Tibial artery (tissue), 4 donors: ENCODE measurements at regions of chr17 and their contacts with region 1.

Region 1: DNA sequence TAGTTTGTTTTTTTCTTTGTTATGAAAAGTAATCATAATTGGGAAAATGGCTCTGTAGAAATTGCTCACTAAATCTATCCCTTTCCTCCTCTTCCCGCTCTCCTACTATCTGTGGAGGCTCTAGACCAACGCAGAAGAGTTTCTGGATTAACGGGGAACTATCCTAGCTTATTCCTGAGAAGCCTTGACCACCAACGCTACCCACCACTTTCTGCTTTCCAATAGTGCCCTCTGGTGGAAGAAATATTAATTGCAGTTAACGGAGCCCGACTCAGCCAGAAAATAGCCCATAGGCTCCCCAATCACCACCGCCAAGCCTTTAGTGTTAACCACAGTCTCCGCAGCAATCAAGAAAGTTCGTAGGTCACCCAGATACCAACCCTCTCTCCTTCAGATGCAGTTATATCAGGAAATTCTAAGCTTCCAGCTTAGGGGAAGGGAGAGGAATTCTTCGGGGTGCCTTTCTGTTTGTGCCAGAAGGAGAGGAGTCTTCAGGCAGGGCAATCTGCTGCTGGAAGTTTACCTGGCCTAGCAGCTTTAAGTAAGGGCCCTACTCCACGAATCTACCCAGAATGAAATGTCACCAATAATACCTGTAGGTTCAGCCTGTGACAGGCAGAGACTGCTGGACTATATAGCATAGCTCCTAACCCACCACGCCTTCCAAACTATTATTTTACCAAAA is 23.0 kb upstream of the NSRP1 start:
- DNase-seq: no peak
- H3K4me3 ChIP-seq: no peak overlapping the region
- H3K27ac ChIP-seq: no peak overlapping the region
- H3K4me1 ChIP-seq: peaks cover 0 to 19% (median 7%) of the 10 kb centered on the region in 4 donors
- H3K27me3 ChIP-seq: no peaks in the 10 kb centered on the region
- CTCF ChIP-seq: peak; percentile 79 to 81

Region 2: GRCh38 chr17:29807520-29808351 is 285.9 kb before region 1 on chr17:
- intact Hi-C with region 1: loop called (anchors 10 kb)
- DNase-seq: peak in 1 of 2 donors; percentile 64
- H3K4me3 ChIP-seq: no peak overlapping the region
- H3K27ac ChIP-seq: no peak overlapping the region
- H3K4me1 ChIP-seq: no peaks in the 10 kb centered on the region
- H3K27me3 ChIP-seq: no peaks in the 10 kb centered on the region
- CTCF ChIP-seq: peak; percentile 65 to 77

Region 3: GRCh38 chr17:29931231-29931932 is 162.2 kb before region 1 on chr17:
- intact Hi-C with region 1: loop called (anchors 10 kb)
- DNase-seq: peak; percentile 60 to 67
- H3K4me3 ChIP-seq: peak overlapping the region; percentile 77 to 98
- H3K27ac ChIP-seq: no peak overlapping the region
- H3K4me1 ChIP-seq: peaks cover 0 to 21% (median 13%) of the 10 kb centered on the region in 4 donors
- H3K27me3 ChIP-seq: no peaks in the 10 kb centered on the region
- CTCF ChIP-seq: peak; percentile 81 to 83

Region 4: DNA sequence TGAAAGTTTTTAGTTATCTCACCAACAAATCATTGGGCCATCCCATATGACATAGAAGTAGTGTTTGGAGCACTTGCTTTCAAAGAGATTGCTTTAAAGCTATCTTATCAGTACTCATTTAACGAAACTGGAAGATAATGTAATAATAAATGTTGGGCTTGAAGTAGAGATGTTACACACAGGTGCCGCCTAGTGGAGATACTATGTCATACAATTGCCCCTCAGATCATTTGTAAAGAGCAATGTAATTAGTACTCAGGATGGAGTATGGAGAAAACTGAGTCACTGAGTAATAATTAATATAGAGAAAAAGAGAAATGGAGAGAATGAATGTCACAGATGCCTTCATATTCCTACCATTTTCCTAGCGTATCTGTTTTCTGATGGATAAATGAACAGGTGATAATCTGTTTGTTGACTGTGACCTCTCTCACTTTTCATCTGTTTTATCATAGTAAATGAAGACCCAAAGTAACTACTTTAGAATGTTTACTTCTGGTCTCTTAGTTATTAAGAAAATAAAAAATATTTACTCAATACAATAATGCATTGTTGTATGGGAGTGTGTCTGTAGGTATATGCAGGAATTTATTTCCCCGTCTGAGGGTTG is 71.8 kb before region 1 on chr17:
- intact Hi-C with region 1: loop called (anchors 10 kb)
- DNase-seq: no peak
- H3K4me3 ChIP-seq: no peak overlapping the region
- H3K27ac ChIP-seq: no peak overlapping the region
- H3K4me1 ChIP-seq: no peaks in the 10 kb centered on the region
- H3K27me3 ChIP-seq: no peaks in the 10 kb centered on the region
- CTCF ChIP-seq: peak; percentile 57 to 64

Region 5: DNA sequence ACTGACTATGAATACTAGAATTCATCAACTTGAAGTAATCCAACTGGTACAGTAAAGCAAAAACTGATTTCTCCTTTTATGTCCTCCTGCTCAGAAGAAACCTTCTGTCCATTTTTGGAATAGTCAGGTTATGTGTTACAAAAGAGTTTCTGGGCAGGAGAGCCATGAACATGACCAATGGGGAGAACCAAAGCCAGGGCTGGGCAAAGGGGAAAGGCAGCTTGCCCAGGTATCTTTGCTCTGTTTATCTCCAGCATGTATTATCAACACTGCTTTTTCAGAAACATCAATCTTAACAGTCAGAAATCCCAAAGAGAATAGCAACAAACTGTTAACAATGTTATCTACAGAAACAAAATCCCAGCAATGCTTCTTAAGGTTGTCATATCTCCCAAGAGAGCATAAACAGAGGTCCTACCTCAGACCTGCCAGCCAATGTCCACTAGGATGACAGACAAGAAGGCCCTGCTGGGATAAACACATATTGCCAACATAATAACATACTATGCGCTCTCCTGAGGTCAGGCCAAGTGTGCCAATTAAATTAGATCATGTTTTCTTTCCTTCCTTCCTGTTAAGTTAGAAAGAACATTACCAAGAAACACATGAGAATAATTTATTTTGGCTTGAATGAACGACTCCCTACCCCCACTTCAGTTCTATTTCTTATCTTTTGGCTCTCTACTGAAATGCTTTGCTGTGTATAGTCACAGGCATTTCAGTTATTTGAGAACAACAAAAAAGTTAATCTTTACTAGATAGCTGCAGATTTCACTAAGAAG is 170.1 kb after region 1 on chr17:
- intact Hi-C with region 1: no loop called
- DNase-seq: no peak
- H3K4me3 ChIP-seq: no peak overlapping the region
- H3K27ac ChIP-seq: peak overlapping the region; percentile 51 to 58
- H3K4me1 ChIP-seq: peaks cover 0 to 28% (median 9%) of the 10 kb centered on the region in 4 donors
- H3K27me3 ChIP-seq: no peaks in the 10 kb centered on the region
- CTCF ChIP-seq: no peak